Activated CD8-positive, alpha-beta T cell treated with anti-CD3 and anti-CD28 coated beads, Interleukin-2, amount 10 ng/mL, durations not matched to agents 7 days and 5 days (primary cell): ENCODE measurements at regions of chr6 and their contacts with region 1.

Region 1: GRCh38 chr6:108896111-108896661 is 48.0 kb downstream of the ARMC2 start:
- DNase-seq: no peak
- ATAC-seq: peak; percentile 73
- H3K4me3 Mint-ChIP-seq: peak overlapping the region; percentile 54
- H3K27ac Mint-ChIP-seq: peak overlapping the region; percentile 86
- H3K4me1 Mint-ChIP-seq: peaks cover 50% of the 10 kb centered on the region
- H3K27me3 Mint-ChIP-seq: no peaks in the 10 kb centered on the region

Region 2: DNA sequence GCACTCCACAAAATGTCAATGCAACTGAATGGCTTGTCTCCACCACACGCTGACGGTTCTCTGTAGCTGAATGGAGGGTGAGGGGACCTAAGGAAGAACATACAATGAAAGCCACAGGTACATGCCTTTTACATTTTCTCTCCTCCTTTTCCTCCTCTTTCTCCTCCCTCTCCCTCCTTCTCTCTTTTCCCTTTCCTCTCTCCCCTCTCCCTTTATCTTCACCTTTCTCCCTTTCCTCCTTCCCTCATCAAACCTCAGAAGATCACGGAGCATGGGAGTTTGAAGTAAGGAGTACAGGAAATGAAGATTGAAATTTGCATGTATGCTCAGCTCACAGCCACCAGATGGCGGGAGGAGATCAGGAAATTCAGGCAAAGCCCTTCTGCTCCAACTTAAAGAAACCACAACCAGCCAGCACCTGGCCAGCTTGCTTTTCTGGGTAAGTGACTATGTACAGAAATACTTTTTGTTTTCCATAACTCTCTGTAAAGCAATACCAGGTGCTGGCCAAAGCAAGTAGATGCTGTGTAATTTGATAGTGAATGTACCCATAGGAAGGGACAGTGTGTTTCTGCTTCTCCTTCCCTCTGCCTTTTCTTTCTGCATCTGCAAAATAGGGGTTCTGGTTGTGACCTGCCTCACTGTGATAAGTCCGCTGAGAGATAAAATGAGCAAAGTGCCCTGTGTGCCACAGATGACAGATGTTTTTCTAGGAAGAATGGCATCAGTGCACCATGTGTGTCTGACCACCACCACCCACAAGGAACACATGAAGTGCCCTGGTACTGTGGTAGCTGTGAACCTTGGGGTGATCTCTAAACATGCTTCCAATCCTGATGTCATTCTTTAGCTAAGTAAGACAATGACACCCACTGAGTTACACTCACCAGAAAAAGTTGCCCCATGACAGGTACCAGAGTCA is 354.1 kb before region 1 on chr6:
- CTCF ChIA-PET with region 1: interaction called, 26 read pairs
- POLR2A ChIA-PET with region 1: interaction called, 3 read pairs
- DNase-seq: peak; percentile 80
- ATAC-seq: peak; percentile 84
- H3K4me3 Mint-ChIP-seq: peak overlapping the region; percentile 26
- H3K27ac Mint-ChIP-seq: no peak overlapping the region
- H3K4me1 Mint-ChIP-seq: peaks cover 21% of the 10 kb centered on the region
- H3K27me3 Mint-ChIP-seq: peaks cover 4% of the 10 kb centered on the region

Region 3: DNA sequence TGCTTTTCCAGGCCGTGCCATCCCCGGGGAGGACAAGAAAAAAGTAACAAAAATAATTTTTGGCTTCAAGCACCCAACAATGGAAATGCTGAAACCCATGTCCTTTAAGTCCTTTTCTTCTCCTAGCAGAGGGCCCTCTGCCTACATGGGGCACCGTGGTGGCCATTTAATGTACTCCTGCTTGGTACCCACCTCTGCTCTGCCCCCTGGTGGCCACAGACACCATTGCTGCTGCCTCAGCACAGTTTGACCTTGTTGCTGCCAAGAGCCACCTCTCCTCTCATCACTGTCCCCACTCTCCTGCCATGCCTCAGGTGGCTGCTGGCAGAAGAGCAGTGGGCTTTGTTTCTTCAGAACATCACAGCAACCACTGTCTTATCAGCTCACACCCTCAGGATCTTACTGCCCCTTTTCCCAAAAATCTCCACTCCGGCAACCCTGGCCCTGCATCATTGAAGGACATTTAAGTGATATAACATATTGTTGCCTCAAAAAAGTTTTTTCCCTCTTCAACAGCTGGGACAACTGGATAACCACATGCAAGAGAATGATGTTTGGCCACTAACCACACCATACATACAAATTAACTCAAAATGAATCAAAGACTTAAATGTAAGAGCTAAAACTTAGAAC is 60.9 kb before region 1 on chr6:
- CTCF ChIA-PET with region 1: interaction called, 22 read pairs
- POLR2A ChIA-PET with region 1: no interaction called
- DNase-seq: peak; percentile 91
- ATAC-seq: peak; percentile 96
- H3K4me3 Mint-ChIP-seq: no peak overlapping the region
- H3K27ac Mint-ChIP-seq: no peak overlapping the region
- H3K4me1 Mint-ChIP-seq: peaks cover 45% of the 10 kb centered on the region
- H3K27me3 Mint-ChIP-seq: peaks cover 14% of the 10 kb centered on the region

Region 4: DNA sequence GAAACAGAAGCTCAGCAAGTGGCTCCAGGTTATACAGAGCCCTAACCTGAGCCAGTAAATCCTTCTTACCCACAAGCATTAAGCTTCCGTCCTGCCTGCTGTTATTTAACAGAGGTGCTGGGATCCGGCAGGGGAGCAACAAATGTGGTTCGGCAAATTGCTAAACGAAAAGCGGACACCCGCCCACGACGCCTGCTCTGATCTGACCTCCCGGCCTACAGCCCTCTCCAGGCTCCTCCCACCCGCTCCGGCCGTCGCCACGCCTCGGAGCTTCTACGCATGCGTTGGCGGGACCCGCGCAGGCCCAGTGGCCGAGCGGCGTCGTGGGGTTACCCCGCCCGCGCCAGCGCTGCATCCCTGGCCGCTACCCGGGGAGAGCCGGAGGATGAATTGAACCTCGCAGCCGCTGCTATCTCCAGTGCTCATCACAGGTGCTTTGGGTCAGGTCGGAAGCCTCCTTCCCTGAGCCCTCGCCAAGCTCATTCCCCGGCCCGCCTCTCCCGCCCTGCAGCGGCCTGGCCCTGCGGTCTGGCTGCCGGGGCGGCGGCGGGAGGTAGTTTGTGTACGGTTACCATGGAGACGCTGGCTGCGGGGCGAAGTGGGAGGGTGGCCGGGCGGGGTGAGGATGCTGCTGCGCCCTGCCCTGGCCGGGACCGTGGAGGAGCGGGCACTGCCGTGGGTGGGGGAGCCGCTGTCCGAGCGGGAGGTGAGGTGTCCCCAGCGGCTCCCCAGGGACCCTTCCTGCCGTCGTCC is 47.9 kb before region 1 on chr6 and contains the start of gene ARMC2:
- CTCF ChIA-PET with region 1: interaction called, 15 read pairs
- POLR2A ChIA-PET with region 1: no interaction called
- DNase-seq: peak; percentile 89
- ATAC-seq: peak; percentile 86
- H3K4me3 Mint-ChIP-seq: peak within 1 kb of the TSS; percentile 84
- H3K27ac Mint-ChIP-seq: peak within 1 kb of the TSS; percentile 83
- H3K4me1 Mint-ChIP-seq: peaks cover 31% of the 10 kb centered on the region
- H3K27me3 Mint-ChIP-seq: peaks cover 5% of the 10 kb centered on the region
- total RNA-seq, gene ARMC2: 10.3 to 10.9 TPM

Region 5: DNA sequence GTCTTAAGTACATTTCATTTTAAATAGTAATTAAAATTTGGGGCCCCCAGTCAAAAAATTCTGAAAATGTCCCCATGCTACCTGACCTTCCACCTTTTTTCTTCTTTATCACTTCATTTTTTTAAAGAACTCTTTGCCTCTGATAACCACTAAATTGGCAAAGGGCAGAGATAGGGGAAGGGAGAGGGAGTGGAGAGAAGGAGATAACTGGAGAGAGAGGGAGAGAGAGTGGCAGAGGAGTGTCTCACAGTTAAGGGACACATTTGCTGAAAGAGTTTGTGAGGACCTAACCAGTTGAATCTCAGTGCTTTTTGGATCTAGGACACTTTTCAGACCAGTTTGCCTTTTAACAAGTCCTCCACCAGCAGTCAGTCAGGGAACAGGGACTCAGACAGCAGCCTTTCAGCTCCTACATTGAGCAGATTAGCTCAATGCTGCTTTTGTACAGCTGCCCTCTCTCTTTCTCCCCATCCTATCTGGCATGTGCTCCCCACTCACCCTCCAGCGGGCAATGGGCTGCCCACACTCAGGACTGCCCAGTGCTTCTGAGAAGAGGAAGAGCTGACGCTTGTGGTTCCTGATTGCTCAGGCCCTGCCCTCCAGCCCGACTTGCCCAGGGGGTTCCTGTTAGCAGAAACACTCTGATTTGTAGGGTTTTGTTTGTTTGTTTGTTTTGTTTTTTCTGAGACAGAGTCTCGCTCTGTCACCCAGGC is 33.6 kb before region 1 on chr6:
- CTCF ChIA-PET with region 1: interaction called, 11 read pairs
- POLR2A ChIA-PET with region 1: no interaction called
- DNase-seq: no peak
- ATAC-seq: no peak
- H3K4me3 Mint-ChIP-seq: no peak overlapping the region
- H3K27ac Mint-ChIP-seq: peak overlapping the region; percentile 53
- H3K4me1 Mint-ChIP-seq: peaks cover 36% of the 10 kb centered on the region
- H3K27me3 Mint-ChIP-seq: no peaks in the 10 kb centered on the region

Region 6: DNA sequence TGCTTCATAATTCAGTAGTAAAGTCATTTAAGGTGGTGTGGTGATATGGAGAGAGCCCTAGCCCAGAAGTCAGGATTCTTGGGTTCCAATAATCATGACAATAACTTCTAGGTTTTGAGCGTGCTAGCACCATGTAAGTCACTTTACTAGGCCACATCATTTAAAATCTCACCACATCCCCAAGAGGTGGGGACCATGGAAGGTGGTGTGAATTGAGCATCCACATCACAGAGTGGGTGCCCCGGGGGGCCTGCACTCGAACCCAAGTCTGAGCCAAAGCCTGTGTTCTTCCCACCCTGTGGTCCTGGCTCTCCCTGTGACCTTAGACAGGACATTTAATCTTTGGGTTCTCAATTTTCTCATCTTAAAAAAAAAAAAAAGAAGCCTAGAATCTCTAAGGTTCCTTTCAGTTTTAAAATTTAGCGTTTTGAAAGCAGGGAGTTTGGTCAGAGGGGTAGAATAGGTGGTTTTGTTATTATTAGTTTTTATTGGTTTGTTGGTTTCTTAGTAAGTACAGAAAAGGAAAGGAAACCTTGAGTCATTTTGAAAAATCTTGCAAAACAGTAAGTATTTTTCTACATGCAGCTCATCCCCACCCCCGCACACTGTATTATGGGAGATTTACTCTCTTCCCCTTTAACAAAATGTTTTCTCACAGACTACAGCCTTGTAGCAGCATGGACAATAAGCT is 21.6 kb before region 1 on chr6:
- CTCF ChIA-PET with region 1: interaction called, 24 read pairs
- POLR2A ChIA-PET with region 1: interaction called, 3 read pairs
- DNase-seq: peak; percentile 78
- ATAC-seq: peak; percentile 80
- H3K4me3 Mint-ChIP-seq: peak overlapping the region; percentile 47
- H3K27ac Mint-ChIP-seq: peak overlapping the region; percentile 94
- H3K4me1 Mint-ChIP-seq: peaks cover 63% of the 10 kb centered on the region
- H3K27me3 Mint-ChIP-seq: no peaks in the 10 kb centered on the region

Region 7: DNA sequence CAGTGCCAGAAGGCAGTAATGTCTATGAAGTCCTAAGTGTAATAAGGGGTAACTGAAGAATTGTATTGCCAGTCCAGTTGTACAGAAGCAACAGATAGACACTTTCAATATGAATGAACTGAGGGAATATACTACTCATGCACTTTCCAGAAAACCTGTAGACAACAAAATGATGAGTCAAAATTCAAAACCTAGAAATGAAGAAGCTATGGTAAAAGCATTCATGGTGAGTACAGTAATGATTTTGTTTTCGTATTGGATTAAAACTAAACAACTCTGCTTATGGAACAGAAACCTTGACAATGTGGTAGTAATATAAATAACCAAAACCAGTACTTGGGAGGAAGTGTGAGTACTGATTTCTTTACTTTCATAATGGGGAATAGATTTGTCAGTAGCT is 13.0 kb before region 1 on chr6:
- CTCF ChIA-PET with region 1: interaction called, 36 read pairs
- POLR2A ChIA-PET with region 1: no interaction called
- DNase-seq: no peak
- ATAC-seq: peak; percentile 61
- H3K4me3 Mint-ChIP-seq: no peak overlapping the region
- H3K27ac Mint-ChIP-seq: peak overlapping the region; percentile 16
- H3K4me1 Mint-ChIP-seq: peaks cover 29% of the 10 kb centered on the region
- H3K27me3 Mint-ChIP-seq: peaks cover 2% of the 10 kb centered on the region